ENCODE measurements at regions of chr1 and their contacts with region 1.

Region 1: GRCh38 chr1:240831191-240831631 is 219.3 kb upstream of the GREM2 start:
- DNase-seq: peak; percentile 83
- H3K4me3 Mint-ChIP-seq: no peak overlapping the region
- H3K27ac Mint-ChIP-seq: peak overlapping the region; percentile 86
- H3K4me1 Mint-ChIP-seq: peaks cover 11% of the 10 kb centered on the region
- H3K27me3 Mint-ChIP-seq: no peaks in the 10 kb centered on the region
- CTCF ChIP-seq: no peak

Region 2: DNA sequence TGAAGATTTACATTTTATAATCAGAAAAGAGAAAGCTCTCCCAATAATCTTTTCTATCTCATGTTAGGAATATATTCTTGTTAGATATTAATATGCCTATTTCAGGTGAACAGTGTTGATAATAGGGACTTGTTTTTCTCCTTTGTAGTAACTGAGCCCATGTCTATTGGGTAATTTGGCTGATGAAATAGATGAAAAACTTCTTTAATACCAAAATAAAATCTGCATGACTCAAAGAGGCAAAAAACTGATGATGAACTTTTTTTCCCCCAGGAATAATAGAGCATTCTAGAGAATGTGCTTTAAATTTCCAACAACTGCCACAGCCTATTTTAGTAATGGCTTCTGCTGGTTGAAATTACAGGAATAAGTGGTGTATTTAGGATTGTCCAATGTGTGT is 40.4 kb before region 1 on chr1:
- CTCF ChIA-PET with region 1: interaction called, 4 read pairs
- POLR2A ChIA-PET with region 1: no interaction called
- intact Hi-C with region 1: loop called (anchors 2 kb)
- DNase-seq: no peak
- H3K4me3 Mint-ChIP-seq: no peak overlapping the region
- H3K27ac Mint-ChIP-seq: peak overlapping the region; percentile 53
- H3K4me1 Mint-ChIP-seq: peaks cover 17% of the 10 kb centered on the region
- H3K27me3 Mint-ChIP-seq: no peaks in the 10 kb centered on the region
- CTCF ChIP-seq: no peak

Region 3: GRCh38 chr1:240803151-240803550 is 28.1 kb before region 1 on chr1:
- CTCF ChIA-PET with region 1: interaction called, 7 read pairs
- POLR2A ChIA-PET with region 1: interaction called, 3 read pairs
- intact Hi-C with region 1: loop called (anchors 1 kb)
- DNase-seq: peak; percentile 96
- H3K4me3 Mint-ChIP-seq: no peak overlapping the region
- H3K27ac Mint-ChIP-seq: peak overlapping the region; percentile 77
- H3K4me1 Mint-ChIP-seq: peaks cover 34% of the 10 kb centered on the region
- H3K27me3 Mint-ChIP-seq: no peaks in the 10 kb centered on the region
- CTCF ChIP-seq: no peak

Region 4: DNA sequence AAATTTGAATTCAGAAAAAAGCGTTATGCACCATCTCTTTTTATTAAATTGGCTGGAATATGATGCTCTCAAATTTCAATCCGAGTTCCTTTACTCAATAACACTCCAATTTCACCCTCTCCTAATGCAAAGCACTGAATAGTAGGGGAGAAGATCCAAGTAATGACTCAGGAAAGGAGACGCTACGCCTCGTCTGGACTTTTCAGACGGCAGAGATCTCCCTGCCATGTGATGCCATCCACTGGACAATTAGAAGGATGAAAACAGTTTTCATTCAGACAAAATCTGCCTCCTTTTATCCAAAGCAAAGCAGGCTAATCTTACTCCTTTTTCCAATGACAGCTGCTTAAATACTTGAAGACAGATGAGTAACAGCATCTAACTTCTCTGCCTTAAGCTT is 23.2 kb after region 1 on chr1:
- CTCF ChIA-PET with region 1: interaction called, 10 read pairs
- POLR2A ChIA-PET with region 1: interaction called, 5 read pairs
- intact Hi-C with region 1: no loop called
- DNase-seq: peak; percentile 79
- H3K4me3 Mint-ChIP-seq: no peak overlapping the region
- H3K27ac Mint-ChIP-seq: no peak overlapping the region
- H3K4me1 Mint-ChIP-seq: no peaks in the 10 kb centered on the region
- H3K27me3 Mint-ChIP-seq: no peaks in the 10 kb centered on the region
- CTCF ChIP-seq: peak; percentile 49

Region 5: DNA sequence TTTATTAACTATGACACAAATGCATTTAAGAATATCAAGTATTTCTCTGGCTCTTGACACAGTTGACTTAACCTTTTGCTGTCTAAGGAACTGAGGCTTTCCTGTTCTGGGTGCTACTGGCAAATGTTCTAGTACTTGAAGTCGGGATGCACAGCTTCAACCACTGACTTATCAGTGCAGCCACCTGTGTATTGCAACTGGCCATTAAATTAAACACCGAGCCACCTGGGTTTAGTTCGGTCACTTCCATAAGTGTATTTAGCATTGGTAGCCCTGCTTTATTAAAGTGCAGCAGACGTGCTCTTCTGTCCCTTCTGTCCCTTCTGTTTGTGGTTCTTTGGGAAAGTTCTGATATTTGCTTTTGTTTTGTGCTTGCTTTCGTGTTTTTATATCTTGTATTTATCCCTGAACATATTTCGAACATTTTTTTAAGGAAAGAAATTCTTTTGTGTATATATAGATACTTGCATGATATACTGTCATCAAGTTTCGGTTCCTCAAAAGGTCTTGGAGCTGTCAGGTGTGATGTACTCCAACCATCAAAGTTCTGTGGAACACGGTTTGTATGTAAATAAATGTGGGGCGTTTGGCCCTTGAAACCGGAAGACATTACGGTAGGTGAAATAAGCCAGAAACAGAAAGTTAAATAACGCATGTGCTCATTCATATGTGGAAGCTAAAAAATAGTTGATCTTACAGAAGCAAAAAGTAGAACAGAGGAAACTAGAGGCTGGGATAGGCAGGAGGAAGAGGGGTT is 78.7 kb after region 1 on chr1:
- CTCF ChIA-PET with region 1: no interaction called
- POLR2A ChIA-PET with region 1: no interaction called
- intact Hi-C with region 1: no loop called
- DNase-seq: no peak
- H3K4me3 Mint-ChIP-seq: no peak overlapping the region
- H3K27ac Mint-ChIP-seq: no peak overlapping the region
- H3K4me1 Mint-ChIP-seq: no peaks in the 10 kb centered on the region
- H3K27me3 Mint-ChIP-seq: no peaks in the 10 kb centered on the region
- CTCF ChIP-seq: no peak

Region 6: DNA sequence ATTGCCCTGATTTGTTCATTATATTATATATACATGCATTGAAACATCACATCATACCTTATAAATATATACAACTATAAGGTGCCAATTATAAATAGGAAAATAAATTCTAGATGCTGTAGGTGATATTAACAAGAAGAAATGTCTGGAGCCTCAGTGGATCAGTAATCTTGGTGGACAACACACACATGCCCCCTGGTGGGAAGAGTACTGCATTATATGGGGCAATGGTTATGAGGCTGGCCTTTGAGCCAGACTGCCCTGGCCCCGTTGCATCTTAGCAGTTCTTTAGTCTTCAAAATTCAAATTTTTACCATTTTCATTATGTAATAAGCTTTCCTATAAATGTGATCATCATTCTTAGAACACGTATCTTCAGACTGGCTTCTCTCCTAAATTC is 115.7 kb after region 1 on chr1:
- CTCF ChIA-PET with region 1: interaction called, 5 read pairs
- POLR2A ChIA-PET with region 1: no interaction called
- intact Hi-C with region 1: loop called (anchors 2 kb)
- DNase-seq: peak; percentile 85
- H3K4me3 Mint-ChIP-seq: no peak overlapping the region
- H3K27ac Mint-ChIP-seq: no peak overlapping the region
- H3K4me1 Mint-ChIP-seq: no peaks in the 10 kb centered on the region
- H3K27me3 Mint-ChIP-seq: no peaks in the 10 kb centered on the region
- CTCF ChIP-seq: peak; percentile 81

Measured in MCF 10A (cell line).